Common myeloid progenitor, CD34-positive (primary cell): ENCODE measurements at regions of chr10 and their contacts with region 1.

Region 1: DNA sequence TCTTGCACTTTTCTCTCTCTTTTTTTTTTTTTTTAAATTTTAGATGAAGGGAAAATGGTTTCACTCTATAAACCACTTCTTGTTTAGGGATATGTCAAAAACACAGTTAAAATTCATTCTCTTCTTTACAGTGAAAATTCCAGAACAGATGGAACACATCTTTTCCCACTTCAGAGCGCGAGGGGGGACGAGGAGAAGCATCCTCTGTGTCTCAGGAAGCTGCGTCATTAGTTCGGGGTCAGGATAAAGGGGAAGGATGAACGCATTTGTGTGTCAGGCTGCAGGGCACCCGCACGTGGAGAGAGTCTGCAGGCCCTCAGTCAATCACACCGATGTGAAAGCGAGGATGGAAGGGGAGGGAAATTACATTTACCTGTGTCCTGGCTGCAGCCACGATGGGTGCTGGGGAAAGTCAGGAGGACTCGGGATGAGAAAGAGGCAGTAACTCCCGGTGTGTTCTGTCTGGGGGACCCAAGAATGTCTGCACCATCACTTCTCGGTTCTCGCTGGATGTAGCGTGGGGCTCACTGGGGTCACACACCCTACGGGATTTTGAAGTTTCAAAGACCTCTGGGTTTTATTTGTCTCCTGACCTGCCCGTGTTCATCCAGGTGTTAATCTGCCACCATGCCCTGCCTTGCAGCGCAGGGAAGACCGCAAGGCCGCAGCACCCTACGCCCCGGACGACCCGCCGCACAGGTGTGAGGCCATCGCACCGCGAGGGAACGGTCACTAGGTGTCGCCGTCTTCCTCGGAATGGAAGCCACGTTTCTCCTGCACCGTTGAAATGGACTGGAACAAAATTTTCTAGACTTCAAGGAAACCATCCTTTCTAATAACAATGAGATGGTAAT is 66.7 kb upstream of the PITRM1 start:
- DNase-seq: peak; percentile 56 to 78 (median 72)
- H3K4me3 ChIP-seq: peak overlapping the region in 1 of 7 experiments; percentile 56
- H3K27ac ChIP-seq: no peak overlapping the region
- H3K4me1 ChIP-seq: peaks cover 0 to 10% (median 4%) of the 10 kb centered on the region in 4 experiments
- H3K27me3 ChIP-seq: peaks cover 0 to 10% (median 0%) of the 10 kb centered on the region in 5 experiments

Region 2: DNA sequence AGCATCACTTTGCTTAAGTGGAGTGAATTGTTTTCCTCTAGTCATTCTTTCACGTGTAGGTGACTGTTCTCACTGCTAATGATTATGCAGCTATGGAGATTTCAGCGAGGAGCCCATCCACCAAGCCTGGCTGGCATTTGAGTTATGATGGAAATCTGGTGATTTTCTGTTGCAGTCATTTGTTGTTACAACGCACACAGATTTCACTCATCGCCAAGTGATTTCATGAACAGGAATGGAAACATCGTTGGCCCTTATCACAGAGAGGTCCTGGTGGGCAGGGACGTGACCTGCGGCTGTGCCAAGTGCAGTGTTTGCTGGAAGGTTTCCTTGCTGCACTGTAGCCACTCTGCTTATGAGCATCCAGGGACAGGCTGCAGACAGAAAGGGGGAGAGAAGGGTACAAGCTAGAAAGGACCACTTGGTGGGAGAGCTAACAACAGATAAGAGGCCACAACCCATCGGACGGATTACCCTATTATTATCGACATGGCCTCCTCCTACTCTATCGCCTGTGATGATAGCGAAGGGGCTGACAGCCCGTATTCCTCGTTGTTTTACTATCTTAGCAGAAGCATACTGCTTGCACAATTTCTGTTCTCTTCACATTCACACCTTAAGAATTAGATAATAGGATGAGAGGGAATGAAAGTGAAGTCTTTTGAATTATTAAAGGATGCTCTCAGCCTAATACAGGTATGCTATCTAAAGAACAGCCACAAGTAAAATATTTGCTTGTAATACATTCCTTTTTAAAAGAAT is 32.2 kb after region 1 on chr10:
- CTCF ChIA-PET with region 1: no interaction called
- POLR2A ChIA-PET with region 1: no interaction called
- DNase-seq: no peak
- H3K4me3 ChIP-seq: no peak overlapping the region
- H3K27ac ChIP-seq: no peak overlapping the region
- H3K4me1 ChIP-seq: no peaks in the 10 kb centered on the region
- H3K27me3 ChIP-seq: no peaks in the 10 kb centered on the region

Region 3: GRCh38 chr10:4658777-4659176 is 1419.5 kb after region 1 on chr10:
- CTCF ChIA-PET with region 1: interaction called, 11 read pairs
- POLR2A ChIA-PET with region 1: no interaction called
- DNase-seq: no peak
- H3K4me3 ChIP-seq: no peak overlapping the region
- H3K27ac ChIP-seq: no peak overlapping the region
- H3K4me1 ChIP-seq: no peaks in the 10 kb centered on the region
- H3K27me3 ChIP-seq: no peaks in the 10 kb centered on the region